Naive thymus-derived CD8-positive, alpha-beta T cell (primary cell): ENCODE measurements at regions of chr14 and their contacts with region 1.

Region 1: DNA sequence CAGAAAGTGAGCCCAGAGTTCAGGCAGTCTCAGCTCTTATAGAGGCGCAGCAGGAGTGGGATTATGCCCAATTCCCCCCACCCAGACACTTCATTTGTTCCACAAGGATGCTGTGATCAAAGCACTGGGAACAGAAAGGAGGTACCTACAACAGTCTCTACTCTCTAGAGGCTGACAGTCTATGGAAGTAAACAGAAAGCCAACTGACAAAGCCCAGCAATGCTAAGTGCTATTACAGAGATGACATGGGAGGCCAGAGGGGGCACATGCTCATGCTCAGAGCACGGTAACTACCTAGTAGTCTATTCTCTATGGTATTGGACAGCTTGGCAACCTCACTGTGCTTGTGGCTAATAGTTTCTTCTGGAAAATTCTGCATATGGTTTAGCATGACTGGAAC is 85.9 kb downstream of the STXBP6 start:
- DNase-seq: no peak
- ATAC-seq: no peak
- H3K4me3 Mint-ChIP-seq: no peak overlapping the region
- H3K27ac Mint-ChIP-seq: no peak overlapping the region
- H3K4me1 Mint-ChIP-seq: no peaks in the 10 kb centered on the region
- H3K27me3 Mint-ChIP-seq: peaks cover 3 to 15% (median 5%) of the 10 kb centered on the region in 5 donors

Region 2: DNA sequence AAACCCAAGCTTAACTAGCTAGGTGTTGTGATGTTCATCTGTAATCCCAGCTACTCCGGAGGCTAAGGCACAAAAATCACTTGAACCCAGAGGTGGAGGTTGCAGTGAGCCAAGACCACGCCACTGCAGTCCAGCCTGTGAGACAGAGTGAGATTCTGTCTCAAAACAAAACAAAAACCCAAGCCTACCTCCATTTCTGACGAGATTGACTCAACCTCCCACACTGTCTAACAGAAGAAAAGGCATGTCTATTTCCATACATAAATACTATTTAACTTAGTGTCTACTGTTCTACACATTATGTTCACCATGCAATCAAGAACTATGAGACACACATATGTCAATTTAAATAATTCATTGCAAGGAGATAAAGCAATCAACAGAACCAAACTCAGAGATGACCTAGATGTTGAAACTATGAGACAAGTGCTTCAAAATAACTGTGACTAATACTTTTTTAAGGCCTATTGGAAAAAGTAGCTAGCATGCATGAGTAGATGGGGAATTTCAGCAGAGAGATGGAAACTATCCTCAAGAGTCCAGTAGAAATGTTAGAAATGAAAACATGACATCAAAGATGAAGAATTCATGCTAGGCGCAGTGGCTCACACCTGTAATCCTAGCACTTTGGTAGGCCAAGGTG is 1086.4 kb before region 1 on chr14:
- POLR2A ChIA-PET with region 1: interaction called, 11 read pairs
- DNase-seq: no peak
- ATAC-seq: no peak
- H3K4me3 Mint-ChIP-seq: no peak overlapping the region
- H3K27ac Mint-ChIP-seq: no peak overlapping the region
- H3K4me1 Mint-ChIP-seq: no peaks in the 10 kb centered on the region
- H3K27me3 Mint-ChIP-seq: peaks cover 10 to 31% (median 18%) of the 10 kb centered on the region in 5 donors

Region 3: GRCh38 chr14:25056688-25057078 is 92.6 kb after region 1 on chr14:
- POLR2A ChIA-PET with region 1: no interaction called
- DNase-seq: no peak
- ATAC-seq: no peak
- H3K4me3 Mint-ChIP-seq: no peak overlapping the region
- H3K27ac Mint-ChIP-seq: no peak overlapping the region
- H3K4me1 Mint-ChIP-seq: no peaks in the 10 kb centered on the region
- H3K27me3 Mint-ChIP-seq: peaks cover 12 to 63% (median 31%) of the 10 kb centered on the region in 5 donors